Activated naive CD4-positive, alpha-beta T cell treated with anti-CD3 and anti-CD28 coated beads for 36 hours (primary cell): ENCODE measurements at regions of chr14 and their contacts with region 1.

Region 1: DNA sequence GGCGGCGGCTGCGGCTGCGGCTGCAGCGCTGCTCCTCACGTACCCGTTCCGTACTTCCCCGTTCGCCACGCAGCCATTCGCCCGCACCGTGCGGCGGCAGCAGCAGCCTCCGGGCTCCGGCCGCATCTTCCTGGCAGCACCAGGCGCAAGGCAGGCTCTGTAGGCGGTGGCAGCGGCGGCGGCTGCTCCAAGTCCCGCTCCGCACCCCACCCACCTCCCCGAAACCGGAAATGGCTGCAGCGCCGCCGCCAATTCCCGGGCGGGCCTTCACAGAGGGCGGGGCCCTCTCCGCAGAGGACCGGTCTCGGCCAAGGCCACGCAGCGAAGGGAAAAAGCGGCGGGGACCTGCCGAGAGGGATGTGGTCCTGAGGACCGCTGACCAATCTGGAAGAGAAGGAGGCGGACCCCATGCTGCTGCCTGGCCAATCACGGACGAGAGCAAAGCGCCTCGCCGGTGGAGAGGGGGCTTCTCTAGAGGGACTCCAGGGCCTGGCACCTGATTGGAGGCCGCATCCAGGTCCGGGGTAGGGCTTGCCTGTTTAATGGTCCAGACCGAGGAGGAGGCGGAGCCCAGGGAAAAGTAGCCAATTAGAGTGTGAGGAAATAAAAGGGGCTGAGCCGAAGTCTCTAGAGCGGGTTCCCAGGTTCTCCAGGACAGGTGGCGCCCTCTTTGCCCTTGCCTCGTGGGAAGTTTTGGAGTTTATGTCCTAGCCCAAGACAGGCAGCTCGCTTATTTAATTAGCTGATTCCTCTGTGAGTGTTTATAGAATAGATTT is at the start of gene SPTLC2:
- DNase-seq: peak; percentile 96
- H3K4me3 Mint-ChIP-seq: peak within 1 kb of the TSS; percentile 90
- H3K27ac Mint-ChIP-seq: peak within 1 kb of the TSS; percentile 79
- H3K4me1 Mint-ChIP-seq: peaks cover 32% of the 10 kb centered on the region
- H3K27me3 Mint-ChIP-seq: no peaks in the 10 kb centered on the region
- total RNA-seq, gene SPTLC2: 16.1 to 18.1 TPM

Region 2: DNA sequence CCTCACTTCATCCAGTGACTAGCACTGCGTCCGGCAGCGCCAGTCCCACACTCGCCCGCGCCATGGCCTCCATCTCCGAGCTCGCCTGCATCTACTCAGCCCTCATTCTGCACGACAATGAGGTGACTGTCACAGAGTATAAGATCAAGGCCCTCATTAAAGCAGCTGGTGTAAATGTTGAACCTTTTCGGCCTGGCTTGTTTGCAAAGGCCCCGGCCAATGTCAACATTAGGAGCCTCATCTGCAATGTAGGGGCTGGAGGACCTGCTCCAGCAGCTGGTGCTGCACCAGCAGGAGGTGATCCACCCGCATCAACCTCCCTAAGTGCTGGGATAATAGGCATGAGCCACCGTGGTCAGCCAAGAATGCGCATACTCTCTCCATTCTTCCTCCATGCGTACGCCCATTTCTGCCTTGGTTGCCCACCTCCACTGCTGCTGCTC is 648.0 kb before region 1 on chr14:
- CTCF ChIA-PET with region 1: no interaction called
- intact Hi-C with region 1: loop called (anchors 10 kb)
- DNase-seq: no peak
- H3K4me3 Mint-ChIP-seq: no peak overlapping the region
- H3K27ac Mint-ChIP-seq: no peak overlapping the region
- H3K4me1 Mint-ChIP-seq: peaks cover 30% of the 10 kb centered on the region
- H3K27me3 Mint-ChIP-seq: no peaks in the 10 kb centered on the region

Region 3: GRCh38 chr14:77457522-77458290 is 158.9 kb before region 1 on chr14 and contains the starts of genes AHSA1 and VIPAS39:
- CTCF ChIA-PET with region 1: no interaction called
- intact Hi-C with region 1: loop called (anchors 1 kb)
- DNase-seq: peak; percentile 98
- H3K4me3 Mint-ChIP-seq: peak within 1 kb of the TSS; percentile 100
- H3K27ac Mint-ChIP-seq: peak within 1 kb of the TSS; percentile 100
- H3K4me1 Mint-ChIP-seq: peaks cover 32% of the 10 kb centered on the region
- H3K27me3 Mint-ChIP-seq: no peaks in the 10 kb centered on the region
- total RNA-seq, gene AHSA1: 230 to 246 TPM
- total RNA-seq, gene VIPAS39: 12.3 to 13.3 TPM

Region 4: GRCh38 chr14:77598366-77599070 is 18.1 kb before region 1 on chr14:
- CTCF ChIA-PET with region 1: no interaction called
- intact Hi-C with region 1: loop called (anchors 1 kb)
- DNase-seq: peak; percentile 38
- H3K4me3 Mint-ChIP-seq: peak overlapping the region; percentile 51
- H3K27ac Mint-ChIP-seq: peak overlapping the region; percentile 78
- H3K4me1 Mint-ChIP-seq: peaks cover 42% of the 10 kb centered on the region
- H3K27me3 Mint-ChIP-seq: no peaks in the 10 kb centered on the region

Region 5: DNA sequence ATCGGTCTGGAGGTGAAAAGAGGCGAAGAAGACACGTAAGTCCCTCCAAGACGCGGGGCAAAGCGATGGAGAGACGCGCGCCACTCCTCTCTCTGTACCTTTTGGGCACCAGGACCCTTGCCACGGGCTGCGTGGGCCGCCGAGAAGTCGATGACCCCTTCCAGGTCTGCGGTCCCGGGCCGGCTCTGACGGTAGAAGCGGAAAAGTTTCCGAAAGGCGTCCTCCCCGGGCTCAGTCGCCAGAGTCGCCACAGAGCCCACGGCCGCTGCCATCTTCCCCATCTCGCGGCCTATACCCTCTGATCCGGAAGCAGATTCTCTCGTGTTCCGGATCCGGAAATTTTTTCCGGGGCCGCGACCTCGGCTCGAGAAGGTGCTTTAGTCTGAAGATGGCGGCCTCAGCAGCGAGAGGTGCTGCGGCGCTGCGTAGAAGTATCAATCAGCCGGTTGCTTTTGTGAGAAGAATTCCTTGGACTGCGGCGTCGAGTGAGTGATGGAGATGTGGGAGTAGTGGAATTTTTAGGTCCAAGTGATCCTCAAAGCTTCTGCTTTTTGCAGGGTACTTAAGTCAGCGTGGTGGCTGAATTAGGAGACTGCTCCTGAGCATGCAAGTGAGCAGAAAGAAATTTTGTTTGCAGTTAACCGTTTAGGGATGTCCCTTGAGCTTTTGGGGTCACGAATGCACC is 91.2 kb after region 1 on chr14 and contains the starts of genes ALKBH1 and SLIRP:
- CTCF ChIA-PET with region 1: no interaction called
- intact Hi-C with region 1: loop called (anchors 1 kb)
- DNase-seq: peak; percentile 92
- H3K4me3 Mint-ChIP-seq: peak within 1 kb of the TSS; percentile 87
- H3K27ac Mint-ChIP-seq: peak within 1 kb of the TSS; percentile 88
- H3K4me1 Mint-ChIP-seq: peaks cover 48% of the 10 kb centered on the region
- H3K27me3 Mint-ChIP-seq: no peaks in the 10 kb centered on the region
- total RNA-seq, gene ALKBH1: 13.5 to 14.5 TPM
- total RNA-seq, gene SLIRP: 134 to 149 TPM

Region 6: DNA sequence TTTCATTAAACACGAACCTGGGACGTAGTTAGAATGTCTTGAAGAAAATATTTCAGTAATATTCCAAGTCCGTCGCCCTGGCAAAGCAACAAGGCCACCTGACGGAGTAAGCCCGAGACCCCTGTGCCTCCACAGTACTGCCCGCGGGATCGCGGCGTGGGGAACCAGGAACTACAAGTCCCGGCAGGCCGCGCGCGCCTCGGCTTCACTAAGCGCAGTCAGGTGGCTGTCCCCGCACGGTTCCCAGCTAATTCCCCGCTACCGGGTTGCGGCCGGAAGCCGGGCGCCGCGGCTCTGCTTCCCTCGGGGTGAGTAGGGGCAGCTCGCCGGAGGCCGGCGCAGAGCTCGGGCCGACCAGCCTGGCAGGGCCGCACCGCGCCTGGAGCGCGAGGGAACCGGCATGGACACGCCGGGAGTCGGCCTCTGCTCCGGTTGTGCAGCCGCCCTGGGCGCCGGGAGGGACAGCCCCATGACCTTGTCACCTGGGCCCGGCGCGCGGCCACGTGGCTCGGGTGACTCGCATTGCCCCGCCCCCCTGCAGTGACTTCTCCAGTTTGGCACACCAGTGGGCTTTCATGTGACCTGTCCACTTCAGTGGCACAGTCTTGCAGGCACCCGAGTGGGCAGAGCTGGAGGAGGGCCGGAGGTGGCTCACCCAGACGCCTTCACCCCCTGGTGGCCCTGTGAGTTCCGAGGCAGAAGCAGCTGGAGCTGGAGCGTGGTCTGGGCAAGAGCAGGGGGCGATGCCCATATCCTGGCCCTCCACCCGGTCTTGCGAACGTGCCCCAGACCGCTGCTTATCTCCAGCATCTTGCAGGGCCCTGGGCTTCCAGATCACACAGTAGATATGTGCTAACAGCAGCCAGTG is 183.5 kb after region 1 on chr14 and contains the start of gene ADCK1:
- CTCF ChIA-PET with region 1: no interaction called
- intact Hi-C with region 1: loop called (anchors 1 kb)
- DNase-seq: peak; percentile 91
- H3K4me3 Mint-ChIP-seq: peak within 1 kb of the TSS; percentile 86
- H3K27ac Mint-ChIP-seq: peak within 1 kb of the TSS; percentile 84
- H3K4me1 Mint-ChIP-seq: peaks cover 12% of the 10 kb centered on the region
- H3K27me3 Mint-ChIP-seq: no peaks in the 10 kb centered on the region
- total RNA-seq, gene ADCK1: 4.2 to 5.1 TPM